AG04450 (cell line): ENCODE measurements at regions of chr2 and their contacts with region 1.

Region 1: GRCh38 chr2:177983183-177983788 is 89.3 kb downstream of the PDE11A start:
- DNase-seq: peak; percentile 47
- H3K4me3 ChIP-seq: no peak overlapping the region
- H3K27ac ChIP-seq: no peak overlapping the region
- H3K27me3 ChIP-seq: no peaks in the 10 kb centered on the region
- CTCF ChIP-seq: peak; percentile 97

Region 2: DNA sequence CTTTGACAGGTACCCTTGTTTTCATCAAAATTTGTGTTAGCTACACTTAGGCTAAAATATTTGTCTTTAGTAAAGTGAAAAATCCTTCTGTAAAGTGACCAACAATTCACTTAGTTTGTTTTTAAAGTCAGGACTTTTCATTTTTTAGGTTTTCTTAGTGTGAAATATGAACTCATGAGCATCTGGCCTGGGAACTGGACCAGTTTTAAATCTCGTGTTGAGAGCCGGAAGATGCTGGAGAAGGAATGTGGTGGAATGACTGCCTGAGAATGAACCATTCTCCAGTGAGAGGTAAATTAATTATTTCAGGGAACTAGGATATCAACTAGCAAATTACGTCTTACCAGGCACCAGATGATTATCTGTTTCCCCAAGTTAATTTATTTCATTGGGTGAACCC is 285.0 kb before region 1 on chr2:
- CTCF ChIA-PET with region 1: no interaction called
- POLR2A ChIA-PET with region 1: no interaction called
- DNase-seq: no peak
- H3K4me3 ChIP-seq: no peak overlapping the region
- H3K27ac ChIP-seq: no peak overlapping the region
- H3K27me3 ChIP-seq: no peaks in the 10 kb centered on the region
- CTCF ChIP-seq: no peak

Region 3: GRCh38 chr2:177998006-177998405 is 14.7 kb after region 1 on chr2:
- CTCF ChIA-PET with region 1: interaction called, 22 read pairs
- POLR2A ChIA-PET with region 1: no interaction called
- DNase-seq: peak; percentile 50
- H3K4me3 ChIP-seq: no peak overlapping the region
- H3K27ac ChIP-seq: peak overlapping the region; percentile 66
- H3K27me3 ChIP-seq: no peaks in the 10 kb centered on the region
- CTCF ChIP-seq: no peak

Region 4: DNA sequence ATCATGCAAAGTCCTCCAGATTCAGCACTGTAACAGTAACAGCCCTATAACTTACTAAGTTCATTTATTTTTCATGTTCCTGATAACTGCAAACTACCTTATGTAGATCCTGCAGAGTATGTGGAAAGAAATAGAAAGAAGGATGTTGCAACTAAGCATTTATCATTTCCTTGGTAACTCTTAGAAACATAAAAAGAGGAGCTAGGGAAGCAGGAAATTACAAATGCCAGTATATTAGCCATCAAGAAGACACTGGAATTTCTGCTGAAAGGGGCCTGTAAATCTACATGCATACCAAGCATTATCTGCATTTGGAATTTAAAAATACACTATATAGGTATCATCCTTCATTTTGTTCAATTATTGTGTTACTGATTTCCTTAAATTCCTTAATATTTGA is 22.5 kb after region 1 on chr2:
- CTCF ChIA-PET with region 1: interaction called, 17 read pairs
- POLR2A ChIA-PET with region 1: interaction called, 3 read pairs
- DNase-seq: no peak
- H3K4me3 ChIP-seq: no peak overlapping the region
- H3K27ac ChIP-seq: no peak overlapping the region
- H3K27me3 ChIP-seq: no peaks in the 10 kb centered on the region
- CTCF ChIP-seq: no peak

Region 5: GRCh38 chr2:178491612-178492011 is 508.3 kb after region 1 on chr2:
- CTCF ChIA-PET with region 1: no interaction called
- POLR2A ChIA-PET with region 1: no interaction called
- DNase-seq: no peak
- H3K4me3 ChIP-seq: no peak overlapping the region
- H3K27ac ChIP-seq: no peak overlapping the region
- H3K27me3 ChIP-seq: no peaks in the 10 kb centered on the region
- CTCF ChIP-seq: no peak